ENCODE measurements at regions of chr18 and their contacts with region 1.

Region 1: DNA sequence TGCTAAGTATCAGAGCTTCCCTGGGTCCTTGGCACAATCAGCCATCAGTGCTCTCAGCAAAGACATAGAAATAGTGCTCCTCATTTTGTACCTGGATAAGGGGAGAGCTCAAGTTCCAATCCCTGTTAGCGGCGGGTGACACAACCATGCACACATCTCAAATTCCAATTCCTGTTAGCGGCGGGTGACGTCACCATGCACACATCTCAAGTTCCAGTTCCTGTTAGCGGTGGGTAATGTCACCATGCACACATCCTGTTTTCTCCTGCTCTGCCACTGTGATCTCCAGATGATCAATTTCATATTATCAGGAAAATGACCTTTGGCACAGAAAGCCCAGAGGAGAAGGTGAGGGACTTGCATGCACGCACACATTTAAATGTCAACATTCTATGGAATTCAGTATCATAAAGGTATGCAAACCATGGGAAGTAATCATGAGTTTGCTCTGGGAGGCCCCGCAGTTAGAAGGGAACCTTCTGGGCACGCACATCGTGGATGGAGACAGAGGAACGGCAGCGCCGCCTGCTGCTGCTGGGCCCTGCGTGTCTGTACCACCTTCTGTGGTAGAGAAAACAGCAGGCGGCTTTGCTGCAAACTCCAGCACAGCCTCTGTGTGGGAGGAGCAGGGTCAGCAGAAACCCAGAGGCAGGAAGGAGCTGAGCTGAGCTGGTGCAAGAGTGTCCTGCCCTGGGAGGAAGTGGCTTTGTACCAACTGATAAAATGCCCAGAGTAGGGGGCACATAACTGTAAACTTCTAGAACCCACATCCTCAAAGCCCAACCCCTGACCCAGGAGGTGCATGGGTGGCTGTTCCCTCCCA is 77.8 kb downstream of the MBP start:
- DNase-seq: peak; percentile 84 to 98 (median 90)

Region 2: DNA sequence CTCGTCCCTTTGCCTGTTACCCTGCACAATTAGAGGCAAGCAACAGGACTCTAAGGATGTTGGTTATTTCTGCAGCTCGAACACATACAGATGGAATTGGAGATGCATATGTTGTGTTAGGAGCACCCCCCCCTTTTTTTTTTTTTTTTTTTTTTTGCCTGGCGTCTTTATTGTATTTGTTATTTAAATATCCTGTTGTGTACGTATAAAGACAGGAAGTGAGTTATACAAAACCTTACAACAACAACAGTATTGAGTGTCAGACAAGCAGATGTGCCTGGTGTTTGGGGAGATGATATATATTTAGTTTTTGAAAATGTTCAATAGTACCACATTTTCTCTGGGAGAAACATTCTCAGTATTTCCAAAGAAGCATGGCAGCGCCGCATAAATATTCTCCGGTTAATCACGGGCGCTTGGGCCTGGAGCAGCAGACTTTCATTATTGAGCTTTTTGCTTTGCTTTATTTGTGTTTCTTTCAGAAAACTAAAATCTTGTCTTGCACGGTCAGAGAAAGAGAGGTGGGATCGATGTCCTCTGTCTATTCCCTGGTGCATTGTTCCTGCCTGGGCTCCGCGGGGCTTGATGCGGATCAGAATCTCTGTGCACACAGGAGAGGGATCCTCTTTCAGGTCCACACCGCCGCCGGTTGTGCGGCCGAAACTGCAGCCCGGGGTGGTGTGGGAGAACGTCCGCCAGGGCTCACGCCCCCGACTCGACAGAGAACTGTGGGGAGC is 536.5 kb before region 1 on chr18:
- intact Hi-C with region 1: no loop called
- DNase-seq: peak in 4 of 10 donors; percentile 20 to 85 (median 24)

Region 3: GRCh38 chr18:77000527-77000926 is 54.3 kb before region 1 on chr18:
- intact Hi-C with region 1: loop called (anchors 1 kb)
- DNase-seq: peak in 6 of 10 donors; percentile 61 to 95 (median 76)

Region 4: DNA sequence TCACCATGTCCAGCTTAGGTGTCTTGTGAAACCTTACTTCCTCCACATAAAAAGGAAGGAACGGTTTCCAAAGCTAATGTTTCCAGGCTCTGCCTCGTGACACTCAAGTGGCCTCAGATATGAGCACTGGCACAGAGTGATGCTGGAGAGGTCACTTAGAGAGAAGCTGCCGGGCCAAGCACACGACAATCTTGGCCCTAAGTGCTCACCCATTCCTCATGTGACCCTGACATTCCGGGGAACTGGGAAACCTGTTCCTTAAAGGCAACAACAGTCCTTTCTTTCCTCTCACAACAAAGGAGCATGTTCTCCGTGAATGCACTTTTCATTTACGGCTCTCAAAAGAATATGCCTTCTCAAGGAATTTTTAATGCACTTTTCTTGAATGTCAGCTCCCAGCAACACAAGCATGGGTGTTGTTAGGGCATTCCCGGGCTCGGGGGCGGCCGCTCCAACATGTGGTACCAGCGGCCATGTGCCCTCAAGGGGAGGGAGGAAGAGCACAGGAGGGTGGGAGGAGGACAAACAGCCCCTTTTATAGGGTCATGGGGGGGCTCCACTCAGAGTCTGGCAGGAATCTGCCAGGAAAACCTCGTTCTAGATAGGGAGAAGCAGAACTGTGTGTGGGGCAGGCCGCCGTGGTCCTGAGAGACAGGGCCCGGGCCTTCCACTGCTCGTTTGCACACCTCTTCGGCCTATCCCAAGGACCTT is 40.9 kb before region 1 on chr18:
- intact Hi-C with region 1: loop called (anchors 1 kb)
- DNase-seq: peak in 3 of 10 donors; percentile 62 to 91 (median 82)

Region 5: GRCh38 chr18:77030201-77030600 is 24.6 kb before region 1 on chr18:
- intact Hi-C with region 1: no loop called
- DNase-seq: peak in 1 of 10 donors; percentile 17